GM10248 (cell line): ENCODE measurements at regions of chr3 and their contacts with region 1.

Region 1: GRCh38 chr3:148861277-148861869 is 3.7 kb upstream of the CPA3 start:
- DNase-seq: peak; percentile 49
- CTCF ChIP-seq: peak; percentile 62

Region 2: DNA sequence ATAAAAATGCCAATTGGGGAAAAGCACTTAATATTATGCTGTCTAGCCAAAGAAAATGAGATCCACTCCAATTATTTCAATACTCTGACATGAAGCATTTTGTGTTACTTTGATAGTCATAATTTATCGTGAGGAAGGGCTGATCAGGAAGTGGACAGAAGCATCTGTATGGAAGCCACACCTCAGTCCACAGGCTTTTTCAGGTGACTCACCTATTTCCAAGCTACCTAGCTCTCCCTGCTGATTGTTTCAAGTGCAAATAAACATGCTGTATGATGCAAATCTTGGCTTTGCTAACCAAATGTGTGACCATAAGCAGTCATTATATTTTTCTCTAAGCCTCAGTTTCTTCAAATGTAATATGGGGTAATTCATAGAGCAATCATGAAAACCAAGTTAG is 64.6 kb before region 1 on chr3:
- CTCF ChIA-PET with region 1: no interaction called
- POLR2A ChIA-PET with region 1: no interaction called
- DNase-seq: no peak
- CTCF ChIP-seq: no peak

Region 3: DNA sequence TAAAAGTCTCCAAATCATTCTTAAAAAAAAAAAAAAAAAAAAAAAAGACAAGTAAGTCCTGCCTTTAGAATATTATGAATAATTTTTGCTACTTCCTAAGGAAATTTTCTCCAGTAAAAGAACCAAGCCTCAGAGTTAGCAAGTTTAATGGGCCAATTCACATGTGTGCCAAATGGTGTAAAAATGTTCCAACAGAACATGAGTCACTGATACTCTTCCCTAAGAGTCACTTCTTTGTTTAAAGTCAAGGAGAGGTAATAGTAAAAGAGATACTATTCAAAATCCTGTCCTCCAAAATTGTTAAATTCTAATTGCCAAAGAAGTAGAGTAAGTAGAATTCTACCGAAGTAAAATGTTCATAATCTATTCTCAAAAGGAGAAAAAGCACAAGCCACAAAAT is 14.0 kb before region 1 on chr3:
- CTCF ChIA-PET with region 1: interaction called, 46 read pairs
- POLR2A ChIA-PET with region 1: no interaction called
- DNase-seq: no peak
- CTCF ChIP-seq: no peak

Region 4: GRCh38 chr3:148880681-148881080 is 19.3 kb after region 1 on chr3:
- CTCF ChIA-PET with region 1: interaction called, 18 read pairs
- POLR2A ChIA-PET with region 1: no interaction called
- DNase-seq: no peak
- CTCF ChIP-seq: no peak

Region 5: GRCh38 chr3:148943506-148944205 is 82.3 kb after region 1 on chr3:
- CTCF ChIA-PET with region 1: interaction called, 78 read pairs
- POLR2A ChIA-PET with region 1: no interaction called
- DNase-seq: peak; percentile 73
- CTCF ChIP-seq: peak; percentile 72

Region 6: DNA sequence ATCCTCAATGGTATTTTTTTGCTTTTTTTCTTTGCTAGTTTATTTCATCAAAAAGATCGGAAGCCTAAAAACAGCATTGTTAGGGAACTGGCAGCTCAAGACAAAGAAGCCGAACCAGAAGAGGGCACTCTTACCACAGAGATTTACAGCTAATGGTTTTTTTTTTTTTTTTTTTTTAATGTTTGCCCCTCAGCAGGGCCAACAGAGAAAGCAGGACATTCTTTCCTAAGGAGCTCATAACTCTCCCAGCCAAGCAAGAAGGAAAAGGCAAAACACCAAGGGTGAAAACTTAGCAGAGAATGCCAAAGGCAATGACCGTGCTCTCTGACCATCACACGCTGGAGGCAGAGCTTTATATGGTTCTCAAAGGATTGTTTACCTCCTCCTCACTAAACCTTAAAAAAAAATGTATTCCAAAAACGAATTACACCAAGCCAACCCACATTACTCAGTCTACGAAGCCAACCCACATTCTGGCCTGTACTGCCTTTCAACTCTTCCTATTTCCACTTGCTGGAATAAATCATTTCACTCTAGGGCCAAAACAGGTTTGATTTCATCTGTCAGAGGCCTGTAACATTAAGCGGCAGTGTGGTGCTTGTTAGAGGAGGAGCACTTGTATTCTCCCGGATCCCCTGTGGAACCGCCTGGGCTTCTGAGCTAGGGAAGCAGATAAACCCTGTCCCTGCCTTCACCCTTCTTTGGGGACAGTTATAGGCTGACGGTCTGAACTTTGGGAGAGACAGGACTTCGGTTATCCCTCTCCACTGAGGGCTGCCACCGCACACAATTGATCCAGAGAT is 94.4 kb after region 1 on chr3:
- CTCF ChIA-PET with region 1: interaction called, 15 read pairs
- POLR2A ChIA-PET with region 1: no interaction called
- DNase-seq: peak; percentile 20
- CTCF ChIP-seq: peak; percentile 55

Region 7: DNA sequence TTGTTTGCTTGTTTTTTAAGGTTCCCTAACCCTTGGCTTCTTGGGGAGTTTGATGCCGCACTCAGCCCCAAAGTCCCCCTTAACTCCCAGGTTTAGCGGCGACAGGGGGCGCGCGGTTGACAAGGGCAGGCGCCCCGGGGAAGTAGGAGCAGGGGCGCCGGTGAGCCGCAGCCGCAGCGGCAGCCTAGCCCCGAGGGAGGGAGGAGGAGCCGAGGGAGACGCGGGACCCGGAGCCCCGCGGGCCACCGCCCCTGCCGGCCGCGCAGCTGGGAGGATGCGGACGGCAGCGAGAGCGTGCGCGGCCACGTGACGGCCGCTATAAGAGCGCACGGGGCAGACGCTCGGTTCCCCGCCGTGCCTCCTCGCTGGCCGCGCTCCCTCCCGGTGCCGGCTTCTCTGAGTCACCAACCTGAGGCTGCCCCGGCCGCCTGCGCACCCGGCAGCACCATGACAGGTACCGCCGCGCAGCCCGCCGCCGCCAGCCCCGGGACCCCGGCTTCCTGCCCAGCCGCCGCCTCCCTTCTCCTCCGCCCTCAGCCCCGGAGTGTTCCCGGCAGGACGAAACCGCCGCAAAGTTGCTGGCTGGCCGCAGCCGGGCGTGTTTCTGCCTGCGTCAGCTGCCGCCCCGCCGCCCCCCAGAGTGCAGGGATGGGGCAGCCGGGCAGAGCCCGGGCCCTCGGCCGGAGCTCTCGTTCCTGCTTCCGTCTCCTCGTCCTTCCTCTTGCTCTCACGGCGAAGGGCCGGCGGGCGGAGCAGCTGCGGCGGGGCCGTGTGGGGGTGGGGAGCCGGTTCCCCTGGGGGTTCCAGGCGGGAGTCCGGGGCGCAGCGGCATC is 130.0 kb after region 1 on chr3 and contains the start of gene GYG1:
- CTCF ChIA-PET with region 1: no interaction called
- POLR2A ChIA-PET with region 1: no interaction called
- DNase-seq: peak; percentile 88
- CTCF ChIP-seq: peak; percentile 46